ENCODE measurements at regions of chr3 and their contacts with region 1.

Region 1: GRCh38 chr3:11944052-11944673 is 60.0 kb upstream of the SYN2 start:
- DNase-seq: peak; percentile 17 to 55
- H3K4me3 ChIP-seq: no peak overlapping the region
- H3K27ac ChIP-seq: no peak overlapping the region
- H3K4me1 ChIP-seq: no peaks in the 10 kb centered on the region
- H3K27me3 ChIP-seq: no peaks in the 10 kb centered on the region
- CTCF ChIP-seq: peak; percentile 78 to 92 (median 84)
- EP300 ChIP-seq: no peak
- POLR2A ChIP-seq: no peak
- RAD21 ChIP-seq: peak; percentile 67 to 77

Region 2: DNA sequence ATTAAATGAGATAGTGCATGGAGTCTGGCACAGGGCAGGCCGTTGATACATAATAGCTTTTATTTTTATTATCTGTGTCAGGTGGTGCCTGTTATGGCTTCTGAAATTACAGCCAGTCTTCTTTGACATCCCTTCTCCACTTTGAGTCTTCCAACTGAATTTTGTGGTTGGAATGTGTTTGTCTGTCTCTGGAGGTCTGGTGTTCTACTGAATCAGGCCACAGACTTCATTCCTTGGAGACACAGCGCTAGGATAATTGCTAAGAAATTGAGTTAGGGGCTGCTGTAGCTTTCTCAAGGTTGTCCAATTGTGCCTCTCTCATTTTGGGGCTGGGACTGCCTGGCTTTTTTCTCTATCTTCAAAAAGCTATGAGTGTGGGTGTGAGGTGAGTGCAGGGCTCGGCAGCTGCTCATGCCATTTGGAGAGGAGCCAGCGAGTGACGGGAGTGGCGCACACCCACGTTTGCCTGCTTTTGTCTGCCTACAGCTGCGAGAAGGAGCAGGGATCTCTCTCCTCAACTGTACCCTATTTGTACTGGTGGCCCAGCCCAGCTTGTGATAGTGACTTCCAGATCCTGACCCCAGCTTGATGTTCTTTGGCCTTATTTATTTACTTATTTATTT is 10.3 kb after region 1 on chr3:
- CTCF ChIA-PET with region 1: interaction called, 27 read pairs
- POLR2A ChIA-PET with region 1: no interaction called
- DNase-seq: no peak
- H3K4me3 ChIP-seq: no peak overlapping the region
- H3K27ac ChIP-seq: no peak overlapping the region
- H3K4me1 ChIP-seq: no peaks in the 10 kb centered on the region
- H3K27me3 ChIP-seq: no peaks in the 10 kb centered on the region
- CTCF ChIP-seq: no peak
- EP300 ChIP-seq: no peak
- POLR2A ChIP-seq: no peak
- RAD21 ChIP-seq: no peak

Measured in H1 (cell line).